CD8-positive, alpha-beta T cell (primary cell): ENCODE measurements at regions of chr3 and their contacts with region 1.

Region 1: GRCh38 chr3:71512000-71512399 is 71.5 kb downstream of the FOXP1 start:
- DNase-seq: peak in 7 of 9 experiments; percentile 23 to 86 (median 54)
- ATAC-seq: peak; percentile 98
- H3K4me3 ChIP-seq: no peak overlapping the region
- H3K4me3 Mint-ChIP-seq: no peak overlapping the region
- H3K27ac ChIP-seq: no peak overlapping the region
- H3K27ac Mint-ChIP-seq: peak overlapping the region; percentile 76
- H3K4me1 ChIP-seq: peaks cover 30% of the 10 kb centered on the region
- H3K4me1 Mint-ChIP-seq: peaks cover 23% of the 10 kb centered on the region
- H3K27me3 ChIP-seq: no peaks in the 10 kb centered on the region
- H3K27me3 Mint-ChIP-seq: no peaks in the 10 kb centered on the region
- CTCF ChIP-seq: peak; percentile 67

Region 2: DNA sequence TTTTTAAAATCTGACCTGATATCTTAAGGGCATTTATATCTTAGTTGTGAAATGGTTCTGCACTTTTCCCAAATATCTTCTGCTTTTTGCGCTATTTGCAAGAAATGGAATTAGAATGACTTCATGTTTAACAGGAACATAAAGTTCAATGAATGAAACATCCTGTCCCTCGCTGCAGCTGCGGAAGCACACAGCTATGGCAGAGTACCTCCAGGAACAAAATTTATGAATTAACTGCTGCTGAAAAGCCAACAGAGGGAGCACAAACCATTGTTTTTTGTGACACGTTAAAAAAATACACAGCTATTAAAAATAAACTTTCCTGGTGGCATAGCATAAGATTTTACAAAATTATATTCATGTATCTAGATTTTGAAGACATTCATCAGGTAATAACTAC is 795.2 kb before region 1 on chr3:
- CTCF ChIA-PET with region 1: no interaction called
- POLR2A ChIA-PET with region 1: no interaction called
- intact Hi-C with region 1: loop called in 1 of 2 experiments (anchors 10 kb)
- DNase-seq: peak in 2 of 9 experiments; percentile 2 to 21
- ATAC-seq: no peak
- H3K4me3 ChIP-seq: no peak overlapping the region
- H3K4me3 Mint-ChIP-seq: no peak overlapping the region
- H3K27ac ChIP-seq: no peak overlapping the region
- H3K27ac Mint-ChIP-seq: no peak overlapping the region
- H3K4me1 ChIP-seq: no peaks in the 10 kb centered on the region
- H3K4me1 Mint-ChIP-seq: no peaks in the 10 kb centered on the region
- H3K27me3 ChIP-seq: no peaks in the 10 kb centered on the region
- H3K27me3 Mint-ChIP-seq: no peaks in the 10 kb centered on the region
- CTCF ChIP-seq: no peak

Region 3: GRCh38 chr3:71064288-71064955 is 447.6 kb before region 1 on chr3:
- CTCF ChIA-PET with region 1: interaction called, 3 read pairs
- POLR2A ChIA-PET with region 1: no interaction called
- intact Hi-C with region 1: loop called in 1 of 2 experiments (anchors 2 kb)
- DNase-seq: peak; percentile 48 to 86 (median 66)
- ATAC-seq: peak; percentile 43
- H3K4me3 ChIP-seq: peak overlapping the region; percentile 65 to 91
- H3K4me3 Mint-ChIP-seq: no peak overlapping the region
- H3K27ac ChIP-seq: peak overlapping the region; percentile 80 to 85
- H3K27ac Mint-ChIP-seq: no peak overlapping the region
- H3K4me1 ChIP-seq: peaks cover 79% of the 10 kb centered on the region
- H3K4me1 Mint-ChIP-seq: peaks cover 67% of the 10 kb centered on the region
- H3K27me3 ChIP-seq: no peaks in the 10 kb centered on the region
- H3K27me3 Mint-ChIP-seq: no peaks in the 10 kb centered on the region
- CTCF ChIP-seq: no peak

Region 4: GRCh38 chr3:71226565-71227269 is 285.3 kb before region 1 on chr3:
- CTCF ChIA-PET with region 1: no interaction called
- POLR2A ChIA-PET with region 1: no interaction called
- intact Hi-C with region 1: loop called in 1 of 2 experiments (anchors 5 kb)
- DNase-seq: peak; percentile 57 to 88 (median 81)
- ATAC-seq: peak; percentile 75
- H3K4me3 ChIP-seq: peak overlapping the region; percentile 0 to 43
- H3K4me3 Mint-ChIP-seq: peak overlapping the region; percentile 73
- H3K27ac ChIP-seq: peak overlapping the region; percentile 18 to 63
- H3K27ac Mint-ChIP-seq: peak overlapping the region; percentile 97
- H3K4me1 ChIP-seq: peaks cover 56% of the 10 kb centered on the region
- H3K4me1 Mint-ChIP-seq: peaks cover 82% of the 10 kb centered on the region
- H3K27me3 ChIP-seq: no peaks in the 10 kb centered on the region
- H3K27me3 Mint-ChIP-seq: no peaks in the 10 kb centered on the region
- CTCF ChIP-seq: no peak

Region 5: GRCh38 chr3:71456156-71456555 is 55.8 kb before region 1 on chr3:
- CTCF ChIA-PET with region 1: interaction called, 22 read pairs
- POLR2A ChIA-PET with region 1: interaction called, 3 read pairs
- intact Hi-C with region 1: loop called in 1 of 2 experiments (anchors 1 kb)
- DNase-seq: peak in 2 of 9 experiments; percentile 46 to 70
- ATAC-seq: peak; percentile 39
- H3K4me3 ChIP-seq: peak overlapping the region; percentile 22 to 32
- H3K4me3 Mint-ChIP-seq: peak overlapping the region; percentile 81
- H3K27ac ChIP-seq: peak overlapping the region; percentile 57 to 78
- H3K27ac Mint-ChIP-seq: peak overlapping the region; percentile 99
- H3K4me1 ChIP-seq: peaks cover 85% of the 10 kb centered on the region
- H3K4me1 Mint-ChIP-seq: peaks cover 95% of the 10 kb centered on the region
- H3K27me3 ChIP-seq: no peaks in the 10 kb centered on the region
- H3K27me3 Mint-ChIP-seq: no peaks in the 10 kb centered on the region
- CTCF ChIP-seq: peak; percentile 50

Region 6: DNA sequence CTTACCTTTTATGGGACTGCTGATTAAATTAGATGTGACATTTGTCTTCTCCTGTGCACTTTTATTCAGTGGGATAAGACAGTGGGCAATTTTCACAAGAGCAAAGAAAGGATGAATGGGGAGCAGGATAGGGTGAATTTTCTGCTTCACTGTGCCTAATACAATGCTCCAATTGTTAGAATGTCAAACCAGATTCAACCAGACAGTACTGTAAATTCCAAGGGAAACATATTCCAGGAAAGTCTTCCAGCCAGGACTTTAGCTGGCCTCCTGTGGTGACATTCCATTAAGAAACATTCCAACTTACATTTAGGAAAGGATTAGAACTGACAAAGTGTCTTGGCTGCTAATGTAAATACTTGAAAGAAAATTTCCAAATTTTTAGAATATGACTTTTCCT is 373.0 kb after region 1 on chr3:
- CTCF ChIA-PET with region 1: no interaction called
- POLR2A ChIA-PET with region 1: no interaction called
- intact Hi-C with region 1: no loop called
- DNase-seq: no peak
- ATAC-seq: no peak
- H3K4me3 ChIP-seq: no peak overlapping the region
- H3K4me3 Mint-ChIP-seq: no peak overlapping the region
- H3K27ac ChIP-seq: no peak overlapping the region
- H3K27ac Mint-ChIP-seq: no peak overlapping the region
- H3K4me1 ChIP-seq: no peaks in the 10 kb centered on the region
- H3K4me1 Mint-ChIP-seq: no peaks in the 10 kb centered on the region
- H3K27me3 ChIP-seq: no peaks in the 10 kb centered on the region
- H3K27me3 Mint-ChIP-seq: peaks cover 17% of the 10 kb centered on the region
- CTCF ChIP-seq: no peak